ENCODE measurements at regions of chr2 and their contacts with region 1.

Region 1: GRCh38 chr2:208025037-208025813 is at the start of gene PLEKHM3:
- DNase-seq: peak; percentile 76
- ATAC-seq: peak; percentile 91
- H3K4me3 Mint-ChIP-seq: peak within 1 kb of the TSS; percentile 86
- H3K27ac Mint-ChIP-seq: peak within 1 kb of the TSS; percentile 92
- H3K4me1 Mint-ChIP-seq: peaks cover 20% of the 10 kb centered on the region
- H3K27me3 Mint-ChIP-seq: no peaks in the 10 kb centered on the region
- CTCF ChIP-seq: no peak
- total RNA-seq, gene PLEKHM3: 12.0 and 12.2 TPM in 2 replicates

Region 2: GRCh38 chr2:207983641-207984042 is 41.6 kb before region 1 on chr2:
- CTCF ChIA-PET with region 1: no interaction called
- POLR2A ChIA-PET with region 1: interaction called, 3 read pairs
- intact Hi-C with region 1: loop called (anchors 1 kb)
- DNase-seq: peak; percentile 23
- ATAC-seq: peak; percentile 88
- H3K4me3 Mint-ChIP-seq: peak overlapping the region; percentile 70
- H3K27ac Mint-ChIP-seq: peak overlapping the region; percentile 94
- H3K4me1 Mint-ChIP-seq: peaks cover 37% of the 10 kb centered on the region
- H3K27me3 Mint-ChIP-seq: no peaks in the 10 kb centered on the region
- CTCF ChIP-seq: no peak

Region 3: GRCh38 chr2:208415897-208416296 is 390.7 kb after region 1 on chr2:
- CTCF ChIA-PET with region 1: no interaction called
- POLR2A ChIA-PET with region 1: no interaction called
- intact Hi-C with region 1: no loop called
- DNase-seq: no peak
- ATAC-seq: no peak
- H3K4me3 Mint-ChIP-seq: no peak overlapping the region
- H3K27ac Mint-ChIP-seq: no peak overlapping the region
- H3K4me1 Mint-ChIP-seq: no peaks in the 10 kb centered on the region
- H3K27me3 Mint-ChIP-seq: peaks cover 9% of the 10 kb centered on the region
- CTCF ChIP-seq: no peak

Region 4: GRCh38 chr2:209696836-209697711 is 1671.8 kb after region 1 on chr2:
- CTCF ChIA-PET with region 1: no interaction called
- POLR2A ChIA-PET with region 1: no interaction called
- intact Hi-C with region 1: no loop called
- DNase-seq: no peak
- ATAC-seq: no peak
- H3K4me3 Mint-ChIP-seq: no peak overlapping the region
- H3K27ac Mint-ChIP-seq: no peak overlapping the region
- H3K4me1 Mint-ChIP-seq: peaks cover 16% of the 10 kb centered on the region
- H3K27me3 Mint-ChIP-seq: no peaks in the 10 kb centered on the region
- CTCF ChIP-seq: no peak

Measured in activated B cell treated with CpG ODN at 0.5 μM for 24 hours (primary cell).